HEK293T (cell line): ENCODE measurements at regions of chr11 and their contacts with region 1.

Region 1: GRCh38 chr11:65040847-65041621 is at the start of gene SAC3D1:
- DNase-seq: peak; percentile 91

Region 2: GRCh38 chr11:65027213-65028067 is 13.6 kb before region 1 on chr11 and contains the start of gene SNX15:
- CTCF ChIA-PET with region 1: interaction called, 3 read pairs
- POLR2A ChIA-PET with region 1: interaction called, 12 read pairs
- DNase-seq: peak; percentile 87

Region 3: DNA sequence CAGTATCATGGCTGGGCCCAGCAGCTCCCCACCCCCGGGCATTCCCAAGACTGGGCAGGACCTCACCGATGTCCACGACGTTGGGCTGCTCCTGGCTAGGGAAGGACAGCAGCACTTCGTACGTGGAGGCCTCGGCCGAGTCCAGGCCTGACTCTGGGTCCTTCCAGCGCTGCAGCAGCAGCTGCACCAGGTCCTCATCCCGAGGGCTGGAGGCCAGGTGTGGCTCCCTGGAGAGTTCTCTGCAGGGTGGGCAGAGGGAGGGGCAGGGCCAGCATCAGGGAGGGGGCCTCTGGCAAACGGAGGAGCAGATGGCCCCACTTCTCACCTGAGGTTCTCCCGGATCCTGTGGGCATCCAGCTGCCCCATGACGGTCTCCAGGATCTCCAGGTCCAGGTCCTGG is 17.0 kb after region 1 on chr11:
- CTCF ChIA-PET with region 1: no interaction called
- POLR2A ChIA-PET with region 1: interaction called, 10 read pairs
- DNase-seq: no peak